SK-N-SH (cell line): ENCODE measurements at regions of chr20 and their contacts with region 1.

Region 1: GRCh38 chr20:7935027-7935551 is 5.2 kb downstream of the HAO1 start:
- DNase-seq: no peak
- H3K4me3 ChIP-seq: no peak overlapping the region
- H3K27ac ChIP-seq: no peak overlapping the region
- H3K4me1 ChIP-seq: peaks cover 0 to 4% of the 10 kb centered on the region in 2 experiments; a peak in 2 of 4 replicates
- H3K27me3 ChIP-seq: 0 out of 2 replicates have a peak, but pooled peaks cover 9% of the 10 kb centered on the region
- CTCF ChIP-seq: no peak
- EP300 ChIP-seq: no peak
- RAD21 ChIP-seq: no peak

Region 2: GRCh38 chr20:7828437-7828836 is 106.7 kb before region 1 on chr20:
- CTCF ChIA-PET with region 1: no interaction called
- POLR2A ChIA-PET with region 1: no interaction called
- DNase-seq: no peak
- H3K4me3 ChIP-seq: no peak overlapping the region
- H3K27ac ChIP-seq: no peak overlapping the region
- H3K4me1 ChIP-seq: no peaks in the 10 kb centered on the region
- H3K27me3 ChIP-seq: no peaks in the 10 kb centered on the region
- CTCF ChIP-seq: no peak
- EP300 ChIP-seq: no peak
- RAD21 ChIP-seq: no peak

Region 3: GRCh38 chr20:7859356-7859802 is 75.7 kb before region 1 on chr20:
- CTCF ChIA-PET with region 1: no interaction called
- POLR2A ChIA-PET with region 1: no interaction called
- DNase-seq: peak; percentile 30
- H3K4me3 ChIP-seq: no peak overlapping the region; a peak in 1 of 4 replicates
- H3K27ac ChIP-seq: no peak overlapping the region
- H3K4me1 ChIP-seq: peaks cover 0 to 9% of the 10 kb centered on the region in 2 experiments; a peak in 3 of 4 replicates
- H3K27me3 ChIP-seq: no peaks in the 10 kb centered on the region
- CTCF ChIP-seq: peak; percentile 86
- EP300 ChIP-seq: no peak
- RAD21 ChIP-seq: peak; percentile 81

Region 4: DNA sequence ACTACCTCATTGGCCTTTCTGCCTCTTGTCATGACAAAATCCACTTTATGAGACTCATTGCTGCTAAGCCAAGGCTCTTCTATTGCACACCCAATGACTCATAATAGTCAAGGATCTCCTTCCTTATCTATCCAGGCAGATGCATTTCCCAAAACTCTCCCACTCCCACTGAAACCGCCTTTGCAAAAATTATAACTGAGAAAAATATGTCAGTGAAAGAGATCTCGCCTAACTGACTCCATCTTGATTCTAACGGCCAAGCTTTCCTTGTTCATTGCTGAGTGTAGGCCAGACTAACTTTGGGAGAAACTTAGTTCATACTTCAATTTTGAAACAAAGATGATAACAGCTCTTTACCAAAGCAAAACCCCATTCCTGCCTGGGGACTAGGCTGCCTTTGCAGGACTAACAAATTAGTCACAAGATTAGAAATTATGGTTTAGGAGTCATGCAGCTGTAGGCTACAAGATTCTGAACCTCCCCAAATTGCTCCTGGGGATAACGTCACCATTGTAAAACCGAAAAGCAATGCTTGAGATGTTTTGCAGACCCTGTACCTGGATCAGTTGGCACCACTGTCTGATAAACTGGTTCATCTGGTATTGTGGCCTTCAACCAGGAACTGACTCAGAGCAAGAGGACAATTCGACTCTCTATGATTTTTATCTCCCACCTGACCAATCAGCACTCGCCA is 41.9 kb before region 1 on chr20:
- CTCF ChIA-PET with region 1: no interaction called
- POLR2A ChIA-PET with region 1: no interaction called
- DNase-seq: no peak
- H3K4me3 ChIP-seq: no peak overlapping the region
- H3K27ac ChIP-seq: no peak overlapping the region
- H3K4me1 ChIP-seq: no peaks in the 10 kb centered on the region
- H3K27me3 ChIP-seq: no peaks in the 10 kb centered on the region; the same call in 1 of the 2 replicates
- CTCF ChIP-seq: no peak
- EP300 ChIP-seq: no peak
- RAD21 ChIP-seq: no peak

Region 5: DNA sequence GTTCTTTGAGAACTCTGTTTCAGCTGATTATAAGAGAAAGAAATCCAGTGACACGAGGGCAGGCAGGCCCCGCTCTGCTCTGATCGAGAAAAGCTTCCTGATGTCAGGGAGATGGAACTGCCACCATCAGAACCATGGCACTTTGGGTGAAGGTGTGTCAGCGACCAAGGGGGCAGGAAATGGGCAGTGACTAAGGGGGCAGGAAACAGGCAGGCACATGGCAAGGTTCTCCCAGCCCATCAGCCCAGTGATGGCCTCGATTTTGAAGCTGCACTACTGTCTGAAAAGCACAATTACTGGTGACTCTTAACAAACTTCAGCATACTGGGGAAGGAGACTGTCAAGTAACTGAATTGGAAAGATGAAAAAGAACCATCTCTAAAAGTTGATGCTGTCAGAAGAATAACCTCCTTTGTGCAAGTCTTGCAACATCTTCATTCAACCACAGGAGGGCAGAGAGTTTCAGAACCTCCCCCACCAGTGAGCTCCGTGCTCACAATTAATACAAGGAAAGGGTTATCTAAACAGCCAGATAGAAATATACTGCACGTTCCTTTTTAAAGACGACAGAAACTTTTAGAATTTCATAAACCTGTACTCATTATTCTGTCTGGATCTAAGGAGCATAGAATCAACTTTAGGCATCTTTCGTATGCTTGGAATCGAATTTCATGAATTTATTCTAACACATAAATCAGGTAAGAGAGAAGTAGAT is 45.4 kb after region 1 on chr20:
- CTCF ChIA-PET with region 1: interaction called, 21 read pairs
- POLR2A ChIA-PET with region 1: no interaction called
- DNase-seq: peak; percentile 33
- H3K4me3 ChIP-seq: no peak overlapping the region
- H3K27ac ChIP-seq: no peak overlapping the region
- H3K4me1 ChIP-seq: no peaks in the 10 kb centered on the region; a peak in 2 of 4 replicates
- H3K27me3 ChIP-seq: no peaks in the 10 kb centered on the region
- CTCF ChIP-seq: peak; percentile 61
- EP300 ChIP-seq: no peak
- RAD21 ChIP-seq: peak; percentile 56

Region 6: GRCh38 chr20:7994809-7995208 is 59.7 kb after region 1 on chr20:
- CTCF ChIA-PET with region 1: interaction called, 36 read pairs
- POLR2A ChIA-PET with region 1: no interaction called
- DNase-seq: no peak
- H3K4me3 ChIP-seq: no peak overlapping the region
- H3K27ac ChIP-seq: no peak overlapping the region
- H3K4me1 ChIP-seq: no peaks in the 10 kb centered on the region
- H3K27me3 ChIP-seq: no peaks in the 10 kb centered on the region
- CTCF ChIP-seq: no peak
- EP300 ChIP-seq: no peak
- RAD21 ChIP-seq: no peak

Region 7: GRCh38 chr20:8043687-8044282 is 108.7 kb after region 1 on chr20:
- CTCF ChIA-PET with region 1: interaction called, 15 read pairs
- POLR2A ChIA-PET with region 1: no interaction called
- DNase-seq: peak; percentile 44
- H3K4me3 ChIP-seq: no peak overlapping the region
- H3K27ac ChIP-seq: no peak overlapping the region
- H3K4me1 ChIP-seq: peaks cover 0 to 6% of the 10 kb centered on the region in 2 experiments; a peak in 2 of 4 replicates
- H3K27me3 ChIP-seq: no peaks in the 10 kb centered on the region
- CTCF ChIP-seq: peak; percentile 81
- EP300 ChIP-seq: no peak
- RAD21 ChIP-seq: peak; percentile 83

Region 8: GRCh38 chr20:8389381-8390036 is 454.4 kb after region 1 on chr20:
- CTCF ChIA-PET with region 1: interaction called, 14 read pairs
- POLR2A ChIA-PET with region 1: no interaction called
- DNase-seq: peak; percentile 27
- H3K4me3 ChIP-seq: no peak overlapping the region; a peak in 1 of 4 replicates
- H3K27ac ChIP-seq: peak overlapping the region; percentile 58 to 88
- H3K4me1 ChIP-seq: peaks cover 14 to 22% of the 10 kb centered on the region in 2 experiments; a peak in 3 of 4 replicates
- H3K27me3 ChIP-seq: no peaks in the 10 kb centered on the region
- CTCF ChIP-seq: peak; percentile 70
- EP300 ChIP-seq: 0 out of 4 replicates have a peak, but pooled peaks of 1 of the 2 experiments have one; percentile 14
- RAD21 ChIP-seq: peak; percentile 64